Caco-2 (cell line): ENCODE measurements at regions of chr19 and their contacts with region 1.

Region 1: DNA sequence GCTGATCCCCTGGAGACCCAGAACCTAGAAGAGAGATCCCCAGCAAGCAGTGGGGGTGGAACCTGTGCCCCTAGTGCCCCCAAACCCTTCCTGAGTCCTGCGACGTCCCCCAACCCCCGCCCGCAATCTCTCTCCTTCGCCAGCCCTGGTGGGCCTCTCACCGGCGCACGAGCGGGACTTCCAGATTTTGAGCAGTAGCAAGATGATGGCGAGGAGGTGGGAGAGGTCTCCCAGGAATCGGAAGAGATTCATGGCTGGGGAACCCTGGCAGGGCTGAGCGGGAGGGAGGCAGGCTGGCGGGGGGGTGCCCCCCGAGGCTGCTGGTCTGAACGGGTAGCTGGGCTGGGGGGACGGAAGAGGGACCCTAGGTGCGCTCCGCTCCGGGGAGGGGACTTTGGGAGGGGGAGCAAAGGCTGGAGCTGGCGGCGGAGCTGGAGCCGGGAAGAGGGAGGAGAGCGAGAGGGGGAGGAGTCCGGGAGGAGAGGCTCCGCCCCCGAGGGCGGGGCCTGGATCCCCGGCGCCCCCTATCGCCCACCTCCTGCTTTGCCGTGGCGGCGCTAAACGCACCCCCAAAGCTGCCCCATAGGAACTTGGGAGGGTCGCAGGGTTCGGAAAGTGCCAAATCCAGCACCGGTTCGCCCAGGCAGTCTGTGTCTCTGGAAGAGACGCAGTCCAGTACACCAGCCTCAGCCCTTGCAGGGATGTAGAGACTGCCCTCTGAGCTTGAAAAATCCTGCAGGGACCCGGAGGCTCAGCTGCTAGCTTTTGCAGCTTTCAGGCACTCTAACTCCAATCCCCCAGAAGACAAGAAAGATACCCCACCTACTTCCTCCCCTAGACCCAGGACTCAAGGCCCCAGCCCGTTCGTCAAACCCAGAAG is at the start of gene KDELR1:
- DNase-seq: peak; percentile 75 to 86
- H3K4me3 ChIP-seq: peak within 1 kb of the TSS; percentile 70
- H3K4me3 Mint-ChIP-seq: peak within 1 kb of the TSS; percentile 80
- H3K27ac Mint-ChIP-seq: peak within 1 kb of the TSS; percentile 61
- H3K4me1 ChIP-seq: peaks cover 27% of the 10 kb centered on the region
- H3K4me1 Mint-ChIP-seq: peaks cover 33% of the 10 kb centered on the region
- H3K27me3 ChIP-seq: no peaks in the 10 kb centered on the region
- H3K27me3 Mint-ChIP-seq: no peaks in the 10 kb centered on the region
- CTCF ChIP-seq: peak; percentile 95 to 98
- total RNA-seq, gene KDELR1: 375 and 381 TPM in 2 replicates

Region 2: GRCh38 chr19:48333467-48334384 is 57.6 kb before region 1 on chr19:
- CTCF ChIA-PET with region 1: interaction called, 49 read pairs
- POLR2A ChIA-PET with region 1: interaction called, 3 read pairs
- intact Hi-C with region 1: no loop called
- DNase-seq: peak; percentile 94 to 95
- H3K4me3 ChIP-seq: peak overlapping the region; percentile 54
- H3K4me3 Mint-ChIP-seq: peak overlapping the region; percentile 80
- H3K27ac Mint-ChIP-seq: peak overlapping the region; percentile 89
- H3K4me1 ChIP-seq: peaks cover 5% of the 10 kb centered on the region
- H3K4me1 Mint-ChIP-seq: peaks cover 25% of the 10 kb centered on the region
- H3K27me3 ChIP-seq: no peaks in the 10 kb centered on the region
- H3K27me3 Mint-ChIP-seq: no peaks in the 10 kb centered on the region
- CTCF ChIP-seq: peak; percentile 82 to 95

Region 3: GRCh38 chr19:48363810-48364563 is 27.4 kb before region 1 on chr19 and contains the starts of genes SYNGR4 and TMEM143:
- CTCF ChIA-PET with region 1: interaction called, 45 read pairs
- POLR2A ChIA-PET with region 1: interaction called, 21 read pairs
- intact Hi-C with region 1: loop called (anchors 1 kb)
- DNase-seq: peak; percentile 100
- H3K4me3 ChIP-seq: peak within 1 kb of the TSS; percentile 43
- H3K4me3 Mint-ChIP-seq: peak within 1 kb of the TSS; percentile 83
- H3K27ac Mint-ChIP-seq: peak within 1 kb of the TSS; percentile 84
- H3K4me1 ChIP-seq: peaks cover 6% of the 10 kb centered on the region; the same call in 1 of the 2 replicates
- H3K4me1 Mint-ChIP-seq: peaks cover 14% of the 10 kb centered on the region
- H3K27me3 ChIP-seq: no peaks in the 10 kb centered on the region
- H3K27me3 Mint-ChIP-seq: no peaks in the 10 kb centered on the region
- CTCF ChIP-seq: no peak
- total RNA-seq, gene SYNGR4: 0.32 TPM in 1 of 2 replicates, not detected in the other
- total RNA-seq, gene TMEM143: 20.4 and 24.4 TPM in 2 replicates

Region 4: GRCh38 chr19:48445606-48446481 is 54.5 kb after region 1 on chr19 and contains the start of gene GRWD1:
- CTCF ChIA-PET with region 1: interaction called, 22 read pairs
- POLR2A ChIA-PET with region 1: interaction called, 3 read pairs
- intact Hi-C with region 1: no loop called
- DNase-seq: peak; percentile 94 to 97
- H3K4me3 ChIP-seq: peak within 1 kb of the TSS; percentile 68
- H3K4me3 Mint-ChIP-seq: peak within 1 kb of the TSS; percentile 97
- H3K27ac Mint-ChIP-seq: peak within 1 kb of the TSS; percentile 99
- H3K4me1 ChIP-seq: peaks cover 10% of the 10 kb centered on the region
- H3K4me1 Mint-ChIP-seq: peaks cover 21% of the 10 kb centered on the region
- H3K27me3 ChIP-seq: no peaks in the 10 kb centered on the region
- H3K27me3 Mint-ChIP-seq: no peaks in the 10 kb centered on the region
- CTCF ChIP-seq: no peak
- total RNA-seq, gene GRWD1: 77.3 and 77.4 TPM in 2 replicates

Region 5: DNA sequence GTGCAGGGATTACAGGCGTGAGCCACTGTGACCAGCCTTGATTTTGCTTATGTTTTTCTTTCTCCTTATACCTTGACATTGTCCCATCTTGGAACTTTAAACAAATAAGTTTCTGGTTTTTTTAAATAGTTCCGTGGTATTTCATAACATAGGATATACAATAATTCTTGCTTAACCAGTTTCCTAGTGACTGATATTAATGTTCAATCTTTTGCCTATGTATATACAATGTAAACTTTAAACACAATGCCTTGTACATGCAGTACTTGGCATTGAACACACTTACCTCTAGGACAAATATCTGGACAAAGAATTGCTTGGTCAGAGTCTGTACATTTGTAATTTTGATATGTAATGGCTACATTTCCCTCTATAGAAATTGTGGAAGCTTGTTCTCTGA is 190.8 kb after region 1 on chr19:
- CTCF ChIA-PET with region 1: interaction called, 12 read pairs
- POLR2A ChIA-PET with region 1: interaction called, 3 read pairs
- intact Hi-C with region 1: loop called (anchors 5 kb)
- DNase-seq: no peak
- H3K4me3 ChIP-seq: no peak overlapping the region
- H3K4me3 Mint-ChIP-seq: no peak overlapping the region
- H3K27ac Mint-ChIP-seq: peak overlapping the region; percentile 64
- H3K4me1 ChIP-seq: peaks cover 8% of the 10 kb centered on the region
- H3K4me1 Mint-ChIP-seq: peaks cover 8% of the 10 kb centered on the region
- H3K27me3 ChIP-seq: no peaks in the 10 kb centered on the region
- H3K27me3 Mint-ChIP-seq: no peaks in the 10 kb centered on the region
- CTCF ChIP-seq: no peak